ENCODE measurements at regions of chr7 and their contacts with region 1.

Region 1: DNA sequence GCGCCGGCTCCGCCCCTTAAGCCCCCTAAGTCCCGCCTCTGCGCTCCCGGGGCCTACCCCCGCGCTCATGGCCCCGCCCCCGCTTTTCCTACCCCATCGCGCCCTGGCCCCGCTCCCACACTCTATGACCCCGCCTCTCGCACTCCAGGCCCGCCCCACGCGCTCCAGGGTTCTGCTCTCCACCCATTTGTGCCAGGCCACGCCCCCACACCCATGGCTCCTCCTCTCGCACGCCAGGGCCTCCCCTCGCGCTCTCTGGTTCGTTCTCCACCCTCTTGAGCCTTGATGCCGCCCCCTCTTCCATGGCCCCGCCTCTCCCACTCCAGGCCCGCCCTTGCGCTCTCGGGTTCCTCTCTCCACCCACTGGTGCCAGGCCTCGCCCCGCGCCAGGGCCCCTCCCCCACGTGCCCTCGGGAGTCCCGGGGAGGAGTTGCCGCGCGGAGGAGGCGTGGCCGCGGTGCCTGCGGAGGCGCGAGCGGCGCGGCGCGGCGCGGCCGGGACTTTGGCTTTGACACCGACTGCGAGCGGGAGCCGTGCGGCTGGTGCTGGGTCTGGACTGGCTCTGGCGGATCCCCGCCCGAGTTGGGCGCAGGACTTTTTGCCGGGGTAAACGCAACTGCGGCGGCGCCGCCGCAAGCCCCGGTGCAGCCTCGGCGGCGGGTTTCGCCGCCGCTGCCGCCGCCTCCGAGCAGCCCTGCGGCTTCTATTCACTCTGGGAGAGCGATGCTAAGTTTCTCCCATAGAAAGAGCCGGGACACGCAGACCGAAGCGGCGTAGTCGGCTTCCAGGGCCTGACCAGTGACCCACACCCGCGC is at the start of gene EEPD1:
- DNase-seq: peak; percentile 100
- ATAC-seq: peak; percentile 92
- H3K4me3 Mint-ChIP-seq: peak within 1 kb of the TSS; percentile 80
- H3K27ac Mint-ChIP-seq: no peak within 1 kb of the TSS
- H3K4me1 Mint-ChIP-seq: peaks cover 11% of the 10 kb centered on the region
- H3K27me3 Mint-ChIP-seq: peaks cover 3% of the 10 kb centered on the region
- CTCF ChIP-seq: no peak
- total RNA-seq, gene EEPD1: 0.59 and 0.64 TPM in 2 replicates

Region 2: DNA sequence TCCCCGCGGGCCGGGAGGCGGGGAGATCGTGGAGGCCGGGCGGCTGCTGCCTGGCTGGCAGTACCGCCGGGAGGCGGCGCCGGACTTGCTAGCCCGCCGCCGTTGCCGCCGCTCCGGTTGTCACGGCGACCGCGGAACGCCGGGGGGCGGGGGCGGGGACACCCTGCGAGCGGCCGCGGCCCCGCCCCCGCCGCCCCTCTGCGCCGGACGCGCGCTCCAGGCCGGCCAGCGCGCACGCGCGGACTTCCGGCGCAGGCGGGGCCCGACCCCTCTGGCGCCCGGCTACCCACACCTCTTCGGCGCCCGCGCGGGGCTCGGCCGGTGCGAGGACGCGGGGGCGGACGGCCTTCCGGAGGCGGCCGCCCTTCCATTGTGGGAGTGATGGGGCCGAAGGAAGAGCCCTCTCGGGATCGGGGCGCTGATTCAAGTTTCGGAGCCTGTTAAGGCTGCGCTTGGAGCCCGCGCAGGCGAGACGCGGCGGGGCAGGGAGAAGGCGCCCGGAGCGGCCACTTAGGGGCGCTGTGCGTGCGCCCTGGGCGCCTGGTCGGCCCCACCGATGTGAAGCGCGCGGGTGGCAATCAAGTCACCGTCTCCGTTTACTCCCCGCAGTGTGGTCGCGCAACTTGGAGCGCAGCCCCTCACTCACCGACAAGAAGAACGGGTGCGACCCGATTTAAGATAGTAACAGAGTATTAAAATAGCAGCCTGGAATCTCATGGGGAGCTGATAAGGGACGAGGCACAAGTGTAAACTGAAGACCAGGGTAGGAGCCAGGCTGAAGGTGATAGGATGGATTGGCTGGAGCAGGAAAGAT is 1115.2 kb before region 1 on chr7:
- CTCF ChIA-PET with region 1: no interaction called
- POLR2A ChIA-PET with region 1: no interaction called
- intact Hi-C with region 1: loop called (anchors 2 kb)
- DNase-seq: peak; percentile 96
- ATAC-seq: peak; percentile 83
- H3K4me3 Mint-ChIP-seq: peak overlapping the region; percentile 86
- H3K27ac Mint-ChIP-seq: peak overlapping the region; percentile 72
- H3K4me1 Mint-ChIP-seq: peaks cover 29% of the 10 kb centered on the region
- H3K27me3 Mint-ChIP-seq: peaks cover 4% of the 10 kb centered on the region
- CTCF ChIP-seq: no peak

Region 3: GRCh38 chr7:35729061-35729783 is 423.7 kb before region 1 on chr7:
- CTCF ChIA-PET with region 1: no interaction called
- POLR2A ChIA-PET with region 1: no interaction called
- intact Hi-C with region 1: loop called (anchors 10 kb)
- DNase-seq: peak; percentile 53
- ATAC-seq: peak; percentile 81
- H3K4me3 Mint-ChIP-seq: peak overlapping the region; percentile 70
- H3K27ac Mint-ChIP-seq: peak overlapping the region; percentile 93
- H3K4me1 Mint-ChIP-seq: peaks cover 93% of the 10 kb centered on the region
- H3K27me3 Mint-ChIP-seq: no peaks in the 10 kb centered on the region
- CTCF ChIP-seq: no peak

Region 4: DNA sequence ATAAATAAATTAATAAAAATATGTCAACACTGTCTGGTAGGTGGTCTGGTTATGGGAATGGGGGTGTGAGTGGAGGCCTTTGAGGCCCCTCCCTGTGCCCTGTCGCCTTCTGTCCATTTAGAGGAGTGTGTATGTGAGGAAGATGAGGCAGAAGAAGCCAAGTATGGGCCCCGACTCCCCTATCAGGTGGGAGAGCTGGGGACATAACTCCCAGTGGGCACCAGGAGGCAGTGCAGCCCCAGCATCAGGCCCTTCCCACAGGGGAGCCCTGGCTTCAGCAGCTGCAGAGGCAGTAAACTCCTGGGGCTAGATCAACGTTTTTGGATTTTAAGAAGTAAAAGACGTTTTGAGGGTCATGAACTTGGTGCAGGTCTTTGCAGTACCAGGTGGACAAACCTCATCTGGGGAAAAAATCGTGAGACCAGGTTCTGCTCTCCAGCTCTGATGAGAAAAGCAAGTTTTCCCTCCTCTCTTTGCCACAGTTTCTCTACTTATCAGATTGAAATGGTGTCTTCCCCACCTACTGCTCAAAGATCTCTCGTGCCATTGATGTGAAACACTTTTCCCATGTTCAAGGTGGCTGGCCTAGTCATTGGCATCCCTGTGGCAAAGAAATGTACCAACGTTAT is 167.7 kb before region 1 on chr7:
- CTCF ChIA-PET with region 1: no interaction called
- POLR2A ChIA-PET with region 1: no interaction called
- intact Hi-C with region 1: loop called (anchors 5 kb)
- DNase-seq: peak; percentile 56
- ATAC-seq: peak; percentile 100
- H3K4me3 Mint-ChIP-seq: no peak overlapping the region
- H3K27ac Mint-ChIP-seq: no peak overlapping the region
- H3K4me1 Mint-ChIP-seq: no peaks in the 10 kb centered on the region
- H3K27me3 Mint-ChIP-seq: peaks cover 2% of the 10 kb centered on the region
- CTCF ChIP-seq: no peak

Region 5: GRCh38 chr7:36291387-36292316 is 138.7 kb after region 1 on chr7:
- CTCF ChIA-PET with region 1: no interaction called
- POLR2A ChIA-PET with region 1: no interaction called
- intact Hi-C with region 1: loop called (anchors 1 kb)
- DNase-seq: peak; percentile 65
- ATAC-seq: peak; percentile 59
- H3K4me3 Mint-ChIP-seq: peak overlapping the region; percentile 58
- H3K27ac Mint-ChIP-seq: no peak overlapping the region
- H3K4me1 Mint-ChIP-seq: peaks cover 28% of the 10 kb centered on the region
- H3K27me3 Mint-ChIP-seq: peaks cover 12% of the 10 kb centered on the region
- CTCF ChIP-seq: peak; percentile 85

Region 6: GRCh38 chr7:36366718-36367560 is 214.0 kb after region 1 on chr7:
- CTCF ChIA-PET with region 1: no interaction called
- POLR2A ChIA-PET with region 1: no interaction called
- intact Hi-C with region 1: loop called (anchors 1 kb)
- DNase-seq: peak; percentile 93
- ATAC-seq: peak; percentile 98
- H3K4me3 Mint-ChIP-seq: peak overlapping the region; percentile 92
- H3K27ac Mint-ChIP-seq: peak overlapping the region; percentile 30
- H3K4me1 Mint-ChIP-seq: peaks cover 5% of the 10 kb centered on the region
- H3K27me3 Mint-ChIP-seq: peaks cover 6% of the 10 kb centered on the region
- CTCF ChIP-seq: no peak

Region 7: DNA sequence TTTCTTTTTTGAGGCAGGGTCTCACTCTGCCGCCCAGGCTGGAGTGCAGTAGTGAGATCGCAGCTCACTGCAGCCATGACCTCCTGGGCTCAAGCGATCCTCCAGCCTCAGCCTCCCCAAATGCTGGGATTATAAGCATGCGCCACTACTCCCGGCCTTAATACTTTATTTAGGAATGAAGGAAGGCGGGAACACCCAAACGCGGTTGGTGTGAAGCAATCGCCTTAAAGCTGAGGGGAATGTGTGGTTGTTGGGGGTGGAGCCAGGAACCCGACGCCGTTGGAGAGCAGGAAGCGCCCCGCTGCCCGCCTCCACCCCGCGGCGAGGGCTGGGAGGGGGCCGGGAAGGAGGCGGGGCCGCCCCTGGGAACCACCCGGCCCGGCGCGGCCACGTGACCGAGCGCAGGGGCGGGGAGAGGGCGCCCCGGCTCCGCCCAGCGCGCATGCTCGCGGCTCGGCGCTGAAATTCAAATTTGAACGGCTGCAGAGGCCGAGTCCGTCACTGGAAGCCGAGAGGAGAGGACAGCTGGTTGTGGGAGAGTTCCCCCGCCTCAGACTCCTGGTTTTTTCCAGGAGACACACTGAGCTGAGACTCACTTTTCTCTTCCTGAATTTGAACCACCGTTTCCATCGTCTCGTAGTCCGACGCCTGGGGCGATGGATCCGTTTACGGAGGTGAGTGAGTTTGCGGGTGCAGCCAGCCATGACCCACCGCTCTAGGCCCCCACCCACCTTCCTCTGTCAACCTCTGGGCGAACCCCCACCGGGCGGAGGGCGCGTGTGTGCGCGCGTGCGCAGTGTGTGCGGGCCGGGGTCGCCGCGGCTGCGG is 236.6 kb after region 1 on chr7 and contains the start of gene ANLN:
- CTCF ChIA-PET with region 1: no interaction called
- POLR2A ChIA-PET with region 1: no interaction called
- intact Hi-C with region 1: loop called (anchors 5 kb)
- DNase-seq: peak; percentile 86
- ATAC-seq: peak; percentile 98
- H3K4me3 Mint-ChIP-seq: peak within 1 kb of the TSS; percentile 76
- H3K27ac Mint-ChIP-seq: peak within 1 kb of the TSS; percentile 56
- H3K4me1 Mint-ChIP-seq: peaks cover 25% of the 10 kb centered on the region
- H3K27me3 Mint-ChIP-seq: peaks cover 7% of the 10 kb centered on the region
- CTCF ChIP-seq: no peak
- total RNA-seq, gene ANLN: 0.29 and 0.73 TPM in 2 replicates

Measured in activated B cell treated with CpG ODN at 0.5 μM for 24 hours (primary cell).